Right cardiac atrium (tissue), 5 donors: ENCODE measurements at regions of chr20 and their contacts with region 1.

Region 1: DNA sequence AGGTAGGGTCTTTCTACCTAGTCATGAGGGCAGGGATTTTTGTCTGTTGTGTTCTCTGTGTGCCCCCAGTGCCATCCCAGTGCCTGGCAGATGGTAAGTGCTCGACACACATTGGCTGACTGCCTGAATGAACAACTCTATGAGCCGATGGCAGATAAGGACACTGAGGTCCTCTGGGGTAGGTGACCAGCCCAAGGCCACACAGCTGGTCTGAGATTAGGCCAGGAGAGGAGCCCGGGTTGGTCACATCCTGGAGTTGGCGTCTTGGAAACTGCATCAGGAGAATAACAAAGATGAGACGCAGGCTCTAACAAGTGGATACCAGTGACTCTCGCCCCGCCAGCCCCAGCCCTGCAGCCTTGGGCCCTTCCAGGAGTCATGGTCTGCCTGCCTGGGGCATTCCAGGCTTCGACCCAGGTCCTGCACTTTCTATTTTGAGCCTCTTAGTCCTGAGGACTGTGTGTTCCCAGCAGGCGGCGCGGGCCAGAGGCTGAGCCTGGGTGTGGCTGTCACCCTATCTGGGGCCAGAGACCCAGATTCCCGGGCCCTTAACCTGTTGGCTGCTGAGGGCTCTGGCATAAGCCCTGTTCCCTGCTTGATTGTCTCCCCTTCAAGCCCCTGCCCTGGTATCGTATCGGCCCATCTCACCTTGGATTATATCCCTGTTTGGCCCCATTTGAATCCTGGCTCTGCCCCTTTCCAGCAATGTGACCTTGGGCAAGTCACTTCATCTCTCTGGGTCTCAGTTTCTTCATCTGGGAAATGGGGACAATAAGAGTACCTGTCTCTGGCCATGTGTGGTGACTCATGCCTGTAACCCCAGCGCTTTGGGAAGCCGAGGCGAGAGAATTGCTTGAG is 88.3 kb downstream of the CEBPB start:
- DNase-seq: peak; percentile 86 to 94 (median 93)
- ATAC-seq: peak; percentile 76 to 80
- H3K4me3 ChIP-seq: no peak overlapping the region
- H3K27ac ChIP-seq: peak overlapping the region; percentile 78
- H3K4me1 ChIP-seq: peaks cover 6% of the 10 kb centered on the region
- H3K27me3 ChIP-seq: no peaks in the 10 kb centered on the region

Region 2: DNA sequence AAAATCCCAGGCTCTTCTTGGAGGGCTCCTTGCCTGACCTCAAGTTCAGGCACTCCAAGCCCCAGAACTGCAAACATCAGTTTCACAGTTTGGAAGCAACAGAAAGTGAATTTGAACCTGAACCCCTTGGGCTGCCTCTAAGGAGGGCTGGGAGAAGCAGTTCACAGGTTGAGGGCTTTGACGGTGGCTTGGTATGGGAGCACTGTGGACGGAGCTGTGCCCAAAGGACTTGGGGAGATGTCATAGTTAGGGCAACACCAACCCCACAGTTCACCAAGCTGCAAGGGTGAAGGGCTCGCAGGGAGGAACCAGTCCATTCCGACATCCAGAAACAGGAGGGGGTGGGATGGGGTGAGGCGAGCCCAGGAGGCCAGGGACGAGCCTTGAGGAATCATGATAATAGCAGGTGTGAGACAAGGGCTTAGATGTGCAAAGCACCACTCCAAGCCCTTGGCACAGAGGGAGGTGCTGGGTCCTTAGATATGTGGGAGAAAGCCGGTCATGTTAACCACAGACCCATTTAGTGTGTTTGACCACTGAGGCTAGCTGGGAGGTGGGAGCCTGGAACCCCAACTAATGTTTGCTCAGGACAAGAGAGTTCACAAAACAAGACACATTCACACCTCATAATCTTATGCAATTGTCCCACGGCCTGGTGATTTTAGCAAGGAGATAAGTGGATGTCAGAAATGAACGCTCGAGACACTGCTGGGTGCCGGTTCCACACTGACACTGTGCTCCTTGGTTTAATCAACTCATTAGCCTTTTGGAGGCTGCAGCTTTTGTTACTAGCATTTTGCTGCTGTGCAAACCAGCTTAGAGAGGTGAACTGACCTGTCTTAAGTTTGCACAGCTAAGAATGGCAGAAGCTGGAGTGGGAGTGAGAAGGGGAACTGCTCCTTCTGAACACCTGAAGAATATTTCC is 83.8 kb before region 1 on chr20:
- intact Hi-C with region 1: loop called in 3 of 4 experiments (anchors 5 to 10 kb)
- DNase-seq: peak in 2 of 3 donors; percentile 52 to 58
- ATAC-seq: no peak
- H3K4me3 ChIP-seq: no peak overlapping the region
- H3K27ac ChIP-seq: peak overlapping the region; percentile 38
- H3K4me1 ChIP-seq: peaks cover 12% of the 10 kb centered on the region
- H3K27me3 ChIP-seq: no peaks in the 10 kb centered on the region

Region 3: GRCh38 chr20:50213513-50214106 is 65.3 kb before region 1 on chr20:
- intact Hi-C with region 1: loop called in 1 of 4 experiments (anchors 5 kb)
- DNase-seq: no peak
- ATAC-seq: no peak
- H3K4me3 ChIP-seq: no peak overlapping the region
- H3K27ac ChIP-seq: no peak overlapping the region
- H3K4me1 ChIP-seq: no peaks in the 10 kb centered on the region
- H3K27me3 ChIP-seq: no peaks in the 10 kb centered on the region

Region 4: DNA sequence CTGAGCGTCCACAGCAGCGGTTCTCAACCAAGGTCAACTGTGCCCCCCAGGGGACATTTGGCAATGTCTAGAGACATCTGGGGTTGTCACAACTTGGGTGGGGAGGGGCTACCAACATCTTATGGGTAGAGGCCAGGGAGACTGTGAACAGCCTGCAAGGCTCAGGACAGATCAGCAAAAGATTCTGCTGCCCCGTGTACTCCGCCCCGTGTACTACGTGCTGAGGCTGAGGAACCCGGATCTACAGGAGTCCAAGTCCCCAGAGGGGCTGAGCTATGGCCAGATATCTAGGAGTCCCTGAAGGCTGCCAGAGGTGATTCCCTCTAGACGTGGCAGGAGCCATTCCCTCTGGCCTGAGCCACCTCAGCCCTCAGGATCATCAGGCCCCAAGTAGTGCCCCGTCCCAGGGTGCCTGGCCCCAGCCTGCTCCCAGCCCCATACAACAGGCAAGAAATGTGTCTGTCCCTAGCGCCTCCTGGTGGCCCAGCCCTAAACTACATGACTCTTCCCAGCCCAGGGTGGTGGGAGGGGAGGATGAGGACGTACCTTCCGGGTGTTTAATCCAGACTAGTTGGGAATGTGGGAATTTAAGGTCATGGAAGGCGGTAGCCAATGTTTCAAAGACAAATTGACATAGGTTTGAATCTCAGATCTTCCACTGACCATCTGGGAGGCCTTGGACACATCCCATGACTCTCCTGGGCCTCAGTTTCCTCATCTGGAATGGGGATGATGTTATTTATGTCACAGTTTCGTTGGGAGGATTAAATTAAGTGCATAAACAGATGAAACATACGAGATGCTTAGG is 181.8 kb after region 1 on chr20:
- intact Hi-C with region 1: loop called in 1 of 4 experiments (anchors 10 kb)
- DNase-seq: peak; percentile 89 to 97 (median 94)
- ATAC-seq: peak; percentile 87
- H3K4me3 ChIP-seq: no peak overlapping the region
- H3K27ac ChIP-seq: no peak overlapping the region
- H3K4me1 ChIP-seq: peaks cover 4% of the 10 kb centered on the region
- H3K27me3 ChIP-seq: no peaks in the 10 kb centered on the region